HepG2 (cell line): ENCODE measurements at regions of chr3 and their contacts with region 1.

Region 1: DNA sequence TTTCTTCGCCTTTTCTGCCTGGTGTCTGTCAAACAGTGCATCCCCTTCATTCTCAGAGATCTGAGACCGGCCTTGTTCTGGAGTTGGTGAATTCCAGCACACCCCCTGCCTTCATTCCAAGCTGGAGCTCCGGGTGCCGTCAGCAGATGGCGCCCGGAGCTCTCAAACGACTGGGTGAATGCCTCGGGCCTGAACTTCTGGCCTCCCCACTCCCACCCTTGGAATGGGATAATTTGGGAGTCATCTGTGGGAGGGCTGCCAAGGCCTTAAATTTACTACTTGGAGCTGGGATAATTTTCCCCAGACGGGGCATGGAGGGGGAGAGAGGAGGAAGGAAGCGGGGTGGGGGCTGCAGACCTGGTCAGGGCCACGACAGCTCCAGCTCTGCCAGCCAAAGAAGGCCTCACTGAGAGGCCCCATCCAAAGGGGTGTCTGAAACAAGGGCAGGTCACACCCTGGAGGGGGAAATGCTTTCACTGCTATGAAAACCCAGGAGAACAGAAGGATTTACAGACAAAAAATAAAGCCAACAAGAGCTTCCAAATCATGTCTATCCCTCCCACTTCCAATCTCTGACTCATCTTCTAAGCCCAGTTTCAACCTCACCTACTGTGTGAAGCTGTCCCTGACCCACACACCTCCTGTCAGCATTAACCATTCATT is 187.9 kb downstream of the OPA1 start:
- DNase-seq: peak; percentile 44
- ATAC-seq: peak; percentile 88
- H3K4me3 ChIP-seq: no peak overlapping the region; a peak in 1 of 6 replicates
- H3K27ac ChIP-seq: no peak overlapping the region
- H3K4me1 ChIP-seq: peaks cover 72% of the 10 kb centered on the region
- H3K27me3 ChIP-seq: peaks cover 0 to 20% of the 10 kb centered on the region in 2 experiments; a peak in 4 of 5 replicates
- CTCF ChIP-seq: peak; percentile 79
- EP300 ChIP-seq: no peak
- POLR2A ChIP-seq: no peak
- RAD21 ChIP-seq: peak; percentile 89

Region 2: GRCh38 chr3:193665370-193665989 is 115.5 kb before region 1 on chr3:
- CTCF ChIA-PET with region 1: interaction called, 4 read pairs
- POLR2A ChIA-PET with region 1: no interaction called
- in situ Hi-C with region 1: no loop called
- intact Hi-C with region 1: loop called (anchors 2 kb)
- DNase-seq: peak; percentile 25
- ATAC-seq: no peak
- H3K4me3 ChIP-seq: no peak overlapping the region
- H3K27ac ChIP-seq: no peak overlapping the region
- H3K4me1 ChIP-seq: peaks cover 14% of the 10 kb centered on the region; the same call in 1 of the 2 replicates
- H3K27me3 ChIP-seq: no peaks in the 10 kb centered on the region
- CTCF ChIP-seq: peak; percentile 34
- EP300 ChIP-seq: no peak
- POLR2A ChIP-seq: no peak
- RAD21 ChIP-seq: no peak

Region 3: DNA sequence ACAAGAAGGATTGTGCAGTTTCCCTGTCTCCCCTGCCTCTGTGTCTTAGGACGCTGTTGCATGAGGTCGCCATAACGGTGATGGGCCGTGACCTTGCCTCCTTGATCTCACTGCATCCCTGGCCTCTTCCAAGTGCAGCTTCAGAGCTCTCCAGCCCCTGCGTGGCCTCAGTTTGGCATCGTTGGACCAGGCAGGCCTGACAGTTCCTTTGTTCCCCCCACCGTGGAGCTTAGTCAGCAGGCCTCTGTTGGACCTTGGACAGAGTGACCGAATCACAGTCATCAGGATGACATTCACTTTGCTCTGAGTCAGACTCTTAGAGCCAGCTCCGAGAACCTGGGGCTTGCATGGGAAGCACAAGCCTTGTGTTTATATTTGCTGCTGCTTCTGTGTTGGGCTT is 48.5 kb before region 1 on chr3:
- CTCF ChIA-PET with region 1: no interaction called
- POLR2A ChIA-PET with region 1: no interaction called
- in situ Hi-C with region 1: no loop called
- intact Hi-C with region 1: loop called (anchors 1 kb)
- DNase-seq: peak; percentile 89
- ATAC-seq: peak; percentile 93
- H3K4me3 ChIP-seq: peak overlapping the region in 1 of 3 experiments; percentile 31; a peak in 1 of 6 replicates
- H3K27ac ChIP-seq: peak overlapping the region; percentile 21
- H3K4me1 ChIP-seq: peaks cover 59% of the 10 kb centered on the region
- H3K27me3 ChIP-seq: peaks cover 0 to 1% of the 10 kb centered on the region in 2 experiments; a peak in 1 of 5 replicates
- CTCF ChIP-seq: no peak
- EP300 ChIP-seq: peak in 1 of 2 experiments; percentile 74; a peak in 2 of 4 replicates
- POLR2A ChIP-seq: no peak
- RAD21 ChIP-seq: no peak

Region 4: GRCh38 chr3:193894121-193894863 is 113.4 kb after region 1 on chr3:
- CTCF ChIA-PET with region 1: no interaction called
- POLR2A ChIA-PET with region 1: no interaction called
- in situ Hi-C with region 1: no loop called
- intact Hi-C with region 1: no loop called
- DNase-seq: no peak
- ATAC-seq: no peak
- H3K4me3 ChIP-seq: no peak overlapping the region
- H3K27ac ChIP-seq: no peak overlapping the region
- H3K4me1 ChIP-seq: no peaks in the 10 kb centered on the region
- H3K27me3 ChIP-seq: peaks cover 2 to 23% of the 10 kb centered on the region in 2 experiments; a peak in 2 of 5 replicates
- CTCF ChIP-seq: no peak
- EP300 ChIP-seq: no peak
- POLR2A ChIP-seq: no peak
- RAD21 ChIP-seq: no peak

Region 5: DNA sequence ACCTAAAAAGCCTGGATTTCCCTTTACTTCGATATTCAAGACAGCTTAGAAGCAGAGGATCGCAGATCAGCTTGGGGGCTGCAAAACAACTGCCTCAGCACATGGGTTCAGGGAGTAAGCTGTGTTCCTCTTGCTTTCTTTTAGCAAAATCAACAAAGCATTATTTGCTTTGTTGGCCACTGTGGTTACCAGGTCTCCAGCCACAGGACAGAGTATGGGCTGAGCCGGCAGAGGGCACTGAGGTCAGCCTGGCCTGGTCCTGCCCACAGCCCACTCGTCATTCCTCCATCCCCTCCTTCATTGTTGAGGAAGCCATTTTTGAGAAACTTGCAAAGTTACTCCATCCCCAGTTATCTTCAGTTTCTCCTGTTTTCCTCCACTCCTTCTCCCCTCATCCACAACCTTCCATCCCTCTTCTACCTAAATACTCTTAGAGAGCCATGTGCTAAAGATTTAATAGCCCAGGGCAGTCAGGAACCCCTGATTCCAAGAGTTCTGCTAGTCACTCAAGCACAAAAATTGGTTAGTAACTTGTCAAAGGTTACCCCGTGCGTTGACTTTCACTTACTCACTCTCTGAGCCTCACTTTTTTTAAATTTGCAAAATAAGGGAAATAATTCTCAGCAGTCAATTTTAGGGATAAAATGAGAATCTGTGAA is 295.0 kb after region 1 on chr3:
- CTCF ChIA-PET with region 1: no interaction called
- POLR2A ChIA-PET with region 1: no interaction called
- in situ Hi-C with region 1: no loop called
- intact Hi-C with region 1: loop called (anchors 5 kb)
- DNase-seq: peak; percentile 86
- ATAC-seq: peak; percentile 94
- H3K4me3 ChIP-seq: peak overlapping the region in 2 of 3 experiments; percentile 4 to 19; a peak in 2 of 6 replicates
- H3K27ac ChIP-seq: peak overlapping the region; percentile 45
- H3K4me1 ChIP-seq: peaks cover 66% of the 10 kb centered on the region
- H3K27me3 ChIP-seq: no peaks in the 10 kb centered on the region; a peak in 2 of 5 replicates
- CTCF ChIP-seq: peak; percentile 80
- EP300 ChIP-seq: peak in 1 of 2 experiments; percentile 78; a peak in 2 of 4 replicates
- POLR2A ChIP-seq: no peak
- RAD21 ChIP-seq: peak; percentile 61; the same call in 1 of the 2 replicates